Aorta (tissue), 5 donors: ENCODE measurements at regions of chr13 and their contacts with region 1.

Region 1: GRCh38 chr13:30802953-30803478 is 67.7 kb downstream of the ALOX5AP start:
- DNase-seq: peak; percentile 92 to 96
- ATAC-seq: peak; percentile 95
- H3K4me3 ChIP-seq: no peak overlapping the region
- H3K27ac ChIP-seq: no peak overlapping the region
- H3K4me1 ChIP-seq: no peaks in the 10 kb centered on the region
- H3K27me3 ChIP-seq: no peaks in the 10 kb centered on the region

Region 2: GRCh38 chr13:30465585-30466357 is 337.2 kb before region 1 on chr13 and contains the start of gene HMGB1:
- intact Hi-C with region 1: loop called (anchors 5 kb)
- DNase-seq: peak; percentile 99
- ATAC-seq: peak; percentile 98
- H3K4me3 ChIP-seq: peak within 1 kb of the TSS; percentile 62 to 69
- H3K27ac ChIP-seq: peak within 1 kb of the TSS; percentile 83 to 94
- H3K4me1 ChIP-seq: peaks cover 0 to 1% of the 10 kb centered on the region in 2 donors
- H3K27me3 ChIP-seq: no peaks in the 10 kb centered on the region
- total RNA-seq, gene HMGB1: 213 to 235 TPM

Region 3: DNA sequence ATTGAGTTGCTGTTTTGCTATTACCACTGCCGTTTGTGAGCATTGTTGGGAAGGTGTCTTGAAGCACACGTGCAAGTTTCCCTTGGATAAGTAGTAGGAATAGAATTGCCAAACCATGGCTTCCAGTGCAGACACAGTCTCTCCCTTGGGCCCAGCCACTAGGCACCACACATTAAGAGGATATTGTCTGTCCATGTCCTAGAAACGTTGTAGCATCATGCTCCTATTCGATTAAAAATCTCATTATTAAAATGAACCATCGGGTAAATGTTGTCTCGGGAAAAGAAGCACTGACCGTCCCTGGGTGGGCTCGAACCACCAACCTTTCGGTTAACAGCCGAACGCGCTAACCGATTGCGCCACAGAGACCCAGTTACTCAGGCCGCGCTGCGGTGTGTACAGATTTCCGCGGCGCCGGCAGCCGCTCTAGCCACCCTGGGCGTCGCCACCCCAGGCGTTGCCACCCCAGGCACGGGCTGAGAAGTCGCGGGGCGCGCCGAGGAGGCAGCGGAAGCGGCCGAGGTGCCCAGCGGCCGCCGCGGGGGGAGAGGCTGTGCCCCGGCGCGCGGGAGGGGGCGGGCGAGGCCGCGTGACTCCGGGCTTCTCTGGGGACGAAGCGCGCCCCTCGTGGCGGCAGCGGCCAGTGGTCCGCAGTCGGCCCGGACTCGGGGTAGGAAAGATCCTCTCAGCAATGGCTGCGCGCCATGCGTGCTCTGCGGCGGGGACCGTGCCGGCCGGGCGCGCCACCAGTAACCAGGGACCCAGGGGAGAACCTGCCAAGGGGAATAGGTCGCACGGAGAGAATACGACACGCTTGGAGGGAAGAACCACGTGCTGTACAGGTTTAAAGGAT is 129.1 kb before region 1 on chr13:
- intact Hi-C with region 1: loop called (anchors 5 kb)
- DNase-seq: peak; percentile 94 to 96
- ATAC-seq: peak; percentile 96
- H3K4me3 ChIP-seq: peak overlapping the region; percentile 0 to 16
- H3K27ac ChIP-seq: peak overlapping the region in 1 of 2 donors; percentile 62
- H3K4me1 ChIP-seq: no peaks in the 10 kb centered on the region
- H3K27me3 ChIP-seq: no peaks in the 10 kb centered on the region

Region 4: GRCh38 chr13:30763786-30764413 is 39.1 kb before region 1 on chr13:
- intact Hi-C with region 1: no loop called
- DNase-seq: no peak
- ATAC-seq: no peak
- H3K4me3 ChIP-seq: no peak overlapping the region
- H3K27ac ChIP-seq: no peak overlapping the region
- H3K4me1 ChIP-seq: no peaks in the 10 kb centered on the region
- H3K27me3 ChIP-seq: peaks cover 0 to 1% of the 10 kb centered on the region in 2 donors

Region 5: DNA sequence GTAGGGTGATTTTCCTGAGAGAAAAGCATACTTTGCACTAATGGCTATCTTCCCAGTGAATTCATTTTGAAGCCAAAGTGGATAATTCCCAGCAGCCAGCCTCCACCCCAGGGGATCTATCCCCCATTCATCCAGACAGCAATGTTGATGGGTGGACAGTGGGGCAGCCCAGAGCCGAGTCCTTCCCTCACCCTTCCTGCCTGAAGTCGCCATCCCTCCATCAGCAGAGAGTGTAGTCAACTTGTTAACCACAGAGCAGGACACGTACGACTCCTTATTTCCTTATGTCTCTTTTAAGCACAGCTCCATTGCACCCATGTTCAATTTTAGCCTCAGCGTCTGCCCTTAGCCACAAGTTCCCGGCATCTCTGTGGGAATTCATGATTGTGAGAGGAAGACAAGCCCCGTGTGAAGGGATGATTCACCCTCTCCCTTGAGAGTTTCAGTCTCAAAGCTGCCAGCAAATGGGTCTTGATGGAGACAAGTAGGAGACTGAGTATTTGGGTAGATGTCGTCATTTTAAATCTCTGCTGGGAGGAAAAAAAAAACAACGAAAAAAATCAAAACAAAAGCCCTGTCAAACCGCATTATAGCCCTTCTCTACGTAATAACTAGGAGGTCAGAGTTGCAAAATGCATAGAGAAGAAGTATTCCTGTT is 44.8 kb after region 1 on chr13:
- intact Hi-C with region 1: loop called (anchors 5 kb)
- DNase-seq: peak in 1 of 2 donors; percentile 71
- ATAC-seq: peak; percentile 79
- H3K4me3 ChIP-seq: no peak overlapping the region
- H3K27ac ChIP-seq: peak overlapping the region; percentile 29 to 73
- H3K4me1 ChIP-seq: no peaks in the 10 kb centered on the region
- H3K27me3 ChIP-seq: no peaks in the 10 kb centered on the region

Region 6: DNA sequence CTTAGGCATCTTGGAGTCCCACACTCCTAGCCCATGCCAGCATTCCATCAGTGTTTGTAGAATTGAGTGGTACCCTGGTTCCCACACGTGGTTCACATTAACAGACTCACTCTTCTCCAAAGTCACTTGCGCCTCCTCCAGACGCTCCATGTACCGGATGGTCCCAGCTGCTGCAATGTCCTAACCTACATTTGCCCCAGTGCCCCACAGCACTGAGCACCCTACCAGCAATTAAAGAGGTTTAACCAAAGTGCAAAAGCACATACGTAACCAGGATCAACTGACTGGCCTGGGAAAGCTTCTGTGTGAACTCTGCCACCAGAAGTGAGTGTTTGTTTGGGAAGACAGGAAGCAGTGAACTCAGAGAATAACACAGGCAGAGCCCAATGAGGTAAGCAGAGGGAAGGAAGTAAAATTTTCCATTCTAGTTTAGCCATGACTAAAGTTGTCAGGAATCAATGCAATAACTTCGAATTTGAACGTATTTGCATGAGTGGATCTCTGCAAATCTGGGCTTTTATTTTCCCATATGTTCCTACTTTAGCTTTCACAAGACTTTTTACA is 95.7 kb after region 1 on chr13:
- intact Hi-C with region 1: loop called in 1 of 2 experiments (anchors 5 kb)
- DNase-seq: peak; percentile 57 to 79
- ATAC-seq: peak; percentile 85
- H3K4me3 ChIP-seq: no peak overlapping the region
- H3K27ac ChIP-seq: peak overlapping the region; percentile 81 to 99
- H3K4me1 ChIP-seq: peaks cover 15 to 19% of the 10 kb centered on the region in 2 donors
- H3K27me3 ChIP-seq: no peaks in the 10 kb centered on the region

Region 7: GRCh38 chr13:31044377-31045285 is 241.6 kb after region 1 on chr13:
- intact Hi-C with region 1: loop called (anchors 5 to 10 kb)
- DNase-seq: peak; percentile 84 to 91
- ATAC-seq: peak; percentile 92
- H3K4me3 ChIP-seq: no peak overlapping the region
- H3K27ac ChIP-seq: no peak overlapping the region
- H3K4me1 ChIP-seq: no peaks in the 10 kb centered on the region
- H3K27me3 ChIP-seq: no peaks in the 10 kb centered on the region

Region 8: GRCh38 chr13:31236211-31236786 is 433.3 kb after region 1 on chr13:
- intact Hi-C with region 1: no loop called
- DNase-seq: no peak
- ATAC-seq: peak; percentile 54
- H3K4me3 ChIP-seq: no peak overlapping the region
- H3K27ac ChIP-seq: no peak overlapping the region
- H3K4me1 ChIP-seq: no peaks in the 10 kb centered on the region
- H3K27me3 ChIP-seq: no peaks in the 10 kb centered on the region